Activated B cell treated with CpG ODN at 0.5 μM for 24 hours (primary cell): ENCODE measurements at regions of chr2 and their contacts with region 1.

Region 1: GRCh38 chr2:177229448-177230242 is 17.1 kb downstream of the HNRNPA3 start:
- DNase-seq: no peak
- ATAC-seq: no peak
- H3K4me3 Mint-ChIP-seq: no peak overlapping the region
- H3K27ac Mint-ChIP-seq: no peak overlapping the region
- H3K4me1 Mint-ChIP-seq: peaks cover 23% of the 10 kb centered on the region
- H3K27me3 Mint-ChIP-seq: no peaks in the 10 kb centered on the region
- CTCF ChIP-seq: no peak

Region 2: DNA sequence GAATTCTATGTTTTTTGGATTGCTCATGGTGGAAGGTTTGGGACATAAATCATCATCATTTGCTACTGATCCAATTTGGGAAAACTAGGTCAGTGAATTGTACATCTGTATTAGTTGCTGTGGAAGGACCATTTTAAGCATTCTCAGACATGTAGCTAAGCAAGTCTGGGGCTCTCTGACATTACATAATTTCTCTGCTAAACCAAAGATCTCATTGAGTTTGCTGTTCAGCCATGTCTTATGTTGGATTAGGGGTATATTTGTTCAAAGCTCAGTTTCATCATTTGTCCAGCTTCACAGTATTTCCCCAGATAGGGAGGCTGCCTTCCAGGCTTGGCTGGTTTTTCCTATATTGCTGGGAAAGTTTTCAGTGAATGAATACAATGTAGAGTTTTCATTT is 560.7 kb before region 1 on chr2:
- CTCF ChIA-PET with region 1: no interaction called
- POLR2A ChIA-PET with region 1: no interaction called
- intact Hi-C with region 1: no loop called
- DNase-seq: no peak
- ATAC-seq: no peak
- H3K4me3 Mint-ChIP-seq: no peak overlapping the region
- H3K27ac Mint-ChIP-seq: no peak overlapping the region
- H3K4me1 Mint-ChIP-seq: no peaks in the 10 kb centered on the region
- H3K27me3 Mint-ChIP-seq: peaks cover 17% of the 10 kb centered on the region
- CTCF ChIP-seq: no peak

Region 3: GRCh38 chr2:177246000-177246399 is 16.4 kb after region 1 on chr2:
- CTCF ChIA-PET with region 1: no interaction called
- POLR2A ChIA-PET with region 1: interaction called, 4 read pairs
- intact Hi-C with region 1: loop called (anchors 2 kb)
- DNase-seq: no peak
- ATAC-seq: no peak
- H3K4me3 Mint-ChIP-seq: no peak overlapping the region
- H3K27ac Mint-ChIP-seq: peak overlapping the region; percentile 24
- H3K4me1 Mint-ChIP-seq: peaks cover 77% of the 10 kb centered on the region
- H3K27me3 Mint-ChIP-seq: no peaks in the 10 kb centered on the region
- CTCF ChIP-seq: no peak

Region 4: DNA sequence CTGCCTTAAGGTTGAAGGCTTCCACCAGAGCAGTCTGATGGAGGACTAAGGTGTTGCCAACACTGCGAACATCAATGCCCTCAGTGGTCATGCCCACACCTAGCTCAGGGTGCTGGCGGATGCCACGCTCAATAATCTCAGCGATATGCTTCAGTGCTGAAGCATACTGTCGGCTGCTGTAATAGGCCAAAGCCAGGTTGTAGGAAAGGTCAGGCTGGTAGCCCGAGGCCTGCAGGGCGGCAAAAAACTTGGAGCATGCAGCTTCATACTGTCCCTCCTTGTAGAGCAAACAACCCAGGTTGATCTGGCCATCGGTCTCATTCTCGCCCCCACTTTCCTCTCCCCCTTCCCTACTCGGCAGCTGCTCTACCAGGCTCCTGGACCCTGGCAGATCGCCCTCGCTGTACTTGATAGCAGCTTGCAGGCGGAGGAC is 322.4 kb after region 1 on chr2:
- CTCF ChIA-PET with region 1: no interaction called
- POLR2A ChIA-PET with region 1: no interaction called
- intact Hi-C with region 1: no loop called
- DNase-seq: no peak
- ATAC-seq: no peak
- H3K4me3 Mint-ChIP-seq: peak overlapping the region; percentile 96
- H3K27ac Mint-ChIP-seq: peak overlapping the region; percentile 100
- H3K4me1 Mint-ChIP-seq: peaks cover 17% of the 10 kb centered on the region
- H3K27me3 Mint-ChIP-seq: no peaks in the 10 kb centered on the region
- CTCF ChIP-seq: no peak